Activated naive CD4-positive, alpha-beta T cell treated with anti-CD3 and anti-CD28 coated beads, Interleukin-2, amount 10 ng/mL, durations not matched to agents 7 days and 5 days (primary cell): ENCODE measurements at regions of chr12 and their contacts with region 1.

Region 1: DNA sequence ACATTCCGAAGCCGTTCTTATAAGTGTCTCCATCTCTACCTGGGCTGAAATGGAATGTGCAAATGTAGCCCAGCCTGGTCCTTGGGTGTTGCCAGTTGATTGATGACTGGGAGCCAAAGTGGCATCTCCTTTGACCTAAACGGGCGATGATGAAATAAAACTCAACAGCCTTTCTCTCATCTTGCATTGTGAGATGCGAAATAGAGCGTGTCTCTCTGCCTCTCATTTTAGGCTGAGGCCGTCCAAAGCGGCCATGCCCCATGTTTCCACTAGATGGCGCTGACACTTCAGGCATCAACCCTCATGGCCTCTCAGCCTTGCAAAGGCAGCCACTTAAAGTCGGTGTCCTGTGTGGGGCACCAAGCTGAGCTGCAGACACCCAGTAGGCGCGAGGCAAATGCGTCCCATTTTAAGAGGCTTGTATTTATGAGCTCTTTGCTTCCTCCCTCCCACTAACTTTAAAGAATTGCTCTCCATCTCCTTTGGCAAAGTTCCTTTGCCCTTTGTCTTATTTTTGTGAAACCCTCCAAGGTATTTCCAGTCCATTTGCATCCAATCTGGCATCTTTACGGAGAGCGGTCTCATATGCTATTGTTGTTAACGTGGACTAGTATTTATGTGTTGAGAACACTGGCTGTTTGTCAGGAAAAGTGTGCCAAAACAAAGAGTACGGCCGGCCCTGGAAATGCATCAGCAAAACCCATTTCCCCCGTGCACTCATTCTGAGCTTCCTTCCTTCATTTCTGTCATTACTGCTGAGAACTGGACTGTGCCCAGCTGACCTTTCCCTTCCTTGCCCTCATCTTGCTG is 25.0 kb downstream of the GPRC5A start:
- DNase-seq: peak; percentile 91
- H3K4me3 Mint-ChIP-seq: no peak overlapping the region
- H3K27ac Mint-ChIP-seq: no peak overlapping the region
- H3K4me1 Mint-ChIP-seq: peaks cover 10% of the 10 kb centered on the region
- H3K27me3 Mint-ChIP-seq: peaks cover 46% of the 10 kb centered on the region

Region 2: DNA sequence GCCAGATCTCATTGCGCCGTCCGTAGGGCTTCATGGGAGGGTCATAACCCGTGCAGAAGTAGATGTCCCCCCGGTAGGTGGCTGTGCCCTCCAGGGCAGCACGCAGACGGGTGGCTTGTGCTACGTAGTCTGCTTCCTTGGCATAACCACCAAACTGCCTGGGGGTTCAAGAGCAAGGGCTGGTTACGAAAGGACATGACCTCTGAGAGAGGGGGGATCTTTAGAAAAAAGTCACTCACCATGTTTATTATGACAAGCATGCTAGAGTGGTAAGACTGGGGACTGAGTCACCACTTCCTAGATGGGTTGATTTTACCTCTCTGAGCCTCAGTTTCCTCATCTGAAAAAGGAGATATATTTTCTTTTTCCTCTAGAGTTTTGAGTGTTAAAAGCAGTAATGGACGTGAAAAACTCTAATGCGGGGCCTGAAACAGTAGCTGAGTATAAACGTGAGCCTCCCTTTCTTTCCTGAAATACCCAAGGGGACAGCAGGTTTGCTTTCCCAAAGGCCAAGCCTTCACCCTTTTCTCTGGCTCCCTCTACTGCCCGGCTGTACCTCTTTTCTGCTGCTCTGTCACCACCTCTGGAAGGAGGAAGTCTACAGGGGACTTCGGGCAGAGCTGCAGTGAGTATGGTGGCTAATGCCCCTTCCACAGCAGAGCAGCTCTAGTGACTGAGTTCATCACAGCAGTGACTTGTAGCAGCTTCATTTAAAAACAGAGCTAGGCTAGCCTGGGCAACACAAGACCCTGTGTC is 59.2 kb after region 1 on chr12:
- CTCF ChIA-PET with region 1: interaction called, 13 read pairs
- DNase-seq: peak; percentile 36
- H3K4me3 Mint-ChIP-seq: no peak overlapping the region
- H3K27ac Mint-ChIP-seq: no peak overlapping the region
- H3K4me1 Mint-ChIP-seq: no peaks in the 10 kb centered on the region
- H3K27me3 Mint-ChIP-seq: no peaks in the 10 kb centered on the region

Region 3: DNA sequence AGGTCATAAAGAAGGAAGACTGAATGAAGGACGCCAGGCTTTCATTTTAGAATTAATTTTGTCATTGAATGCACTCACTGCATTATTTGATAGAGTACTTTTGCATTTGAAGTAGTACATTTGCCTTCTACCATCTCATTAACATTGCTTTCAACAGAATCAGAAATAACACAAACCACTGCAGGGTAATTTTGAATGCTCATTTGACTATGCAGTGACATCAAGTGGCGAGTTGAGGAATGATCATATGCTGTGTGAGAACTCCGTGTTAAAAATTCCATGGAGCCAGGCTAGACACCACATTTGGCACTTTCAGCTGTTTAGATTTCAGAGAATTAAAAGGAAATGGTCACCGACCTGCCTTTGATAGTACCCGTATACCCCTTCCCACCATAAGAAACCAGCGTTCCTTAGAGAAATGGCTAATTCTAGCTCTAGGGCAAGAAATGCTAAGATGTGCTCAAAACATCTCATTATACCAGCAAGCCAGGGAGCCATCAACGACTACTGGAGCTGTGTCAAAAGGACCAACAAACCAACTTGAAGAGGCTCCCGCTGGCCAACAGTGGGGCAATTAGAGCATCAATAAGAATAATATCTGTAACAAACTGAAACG is 67.2 kb after region 1 on chr12:
- CTCF ChIA-PET with region 1: interaction called, 21 read pairs
- DNase-seq: peak; percentile 39
- H3K4me3 Mint-ChIP-seq: no peak overlapping the region
- H3K27ac Mint-ChIP-seq: no peak overlapping the region
- H3K4me1 Mint-ChIP-seq: no peaks in the 10 kb centered on the region
- H3K27me3 Mint-ChIP-seq: no peaks in the 10 kb centered on the region

Region 4: GRCh38 chr12:13233830-13234641 is 317.7 kb after region 1 on chr12:
- CTCF ChIA-PET with region 1: interaction called, 12 read pairs
- DNase-seq: peak; percentile 58
- H3K4me3 Mint-ChIP-seq: no peak overlapping the region
- H3K27ac Mint-ChIP-seq: no peak overlapping the region
- H3K4me1 Mint-ChIP-seq: no peaks in the 10 kb centered on the region
- H3K27me3 Mint-ChIP-seq: peaks cover 13% of the 10 kb centered on the region